Posterior vena cava (tissue), 2 donors: ENCODE measurements at regions of chr2 and their contacts with region 1.

Region 1: DNA sequence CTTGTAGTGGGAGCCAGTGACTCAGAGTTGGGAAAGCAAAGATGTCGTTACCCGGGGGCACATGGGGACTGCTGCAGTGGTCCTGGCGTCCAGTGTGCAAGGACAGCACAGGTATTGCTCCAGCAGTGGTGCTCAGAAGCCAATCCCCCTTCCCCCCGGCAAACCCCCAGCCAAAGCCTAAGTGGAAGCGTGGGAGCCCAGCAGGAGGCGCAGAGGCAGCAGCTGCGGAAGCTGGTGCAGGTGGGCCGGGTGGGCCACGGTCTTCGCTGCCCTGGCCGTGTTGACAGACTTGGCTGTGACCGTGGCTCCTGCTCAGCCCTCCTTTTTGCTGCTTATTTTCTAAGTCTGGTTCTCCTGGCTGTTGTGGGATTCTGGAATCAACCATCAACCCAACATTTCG is 369.8 kb upstream of the ST6GAL2 start:
- DNase-seq: no peak

Region 2: GRCh38 chr2:107242811-107243210 is 12.9 kb before region 1 on chr2:
- intact Hi-C with region 1: loop called in 1 of 2 experiments (anchors 1 kb)
- DNase-seq: no peak